CD8-positive, alpha-beta T cell (primary cell): ENCODE measurements at regions of chr4 and their contacts with region 1.

Region 1: GRCh38 chr4:42656944-42657792 is at the start of gene ATP8A1:
- DNase-seq: peak; percentile 90 to 97 (median 93)
- ATAC-seq: peak; percentile 94
- H3K4me3 ChIP-seq: peak within 1 kb of the TSS; percentile 80 to 93
- H3K4me3 Mint-ChIP-seq: peak within 1 kb of the TSS; percentile 97
- H3K27ac ChIP-seq: peak within 1 kb of the TSS; percentile 81 to 95
- H3K27ac Mint-ChIP-seq: peak within 1 kb of the TSS; percentile 99
- H3K4me1 ChIP-seq: peaks cover 34% of the 10 kb centered on the region
- H3K4me1 Mint-ChIP-seq: peaks cover 53% of the 10 kb centered on the region
- H3K27me3 ChIP-seq: no peaks in the 10 kb centered on the region
- H3K27me3 Mint-ChIP-seq: no peaks in the 10 kb centered on the region
- CTCF ChIP-seq: no peak
- total RNA-seq, gene ATP8A1: 130 to 134 TPM

Region 2: GRCh38 chr4:41990365-41991111 is 666.6 kb before region 1 on chr4 and contains the start of gene SLC30A9:
- CTCF ChIA-PET with region 1: no interaction called
- POLR2A ChIA-PET with region 1: no interaction called
- intact Hi-C with region 1: loop called in 1 of 2 experiments (anchors 5 kb)
- DNase-seq: peak; percentile 84 to 98 (median 92)
- ATAC-seq: peak; percentile 94
- H3K4me3 ChIP-seq: peak within 1 kb of the TSS; percentile 77 to 78
- H3K4me3 Mint-ChIP-seq: peak within 1 kb of the TSS; percentile 95
- H3K27ac ChIP-seq: peak within 1 kb of the TSS; percentile 83 to 91
- H3K27ac Mint-ChIP-seq: peak within 1 kb of the TSS; percentile 98
- H3K4me1 ChIP-seq: peaks cover 20% of the 10 kb centered on the region
- H3K4me1 Mint-ChIP-seq: peaks cover 39% of the 10 kb centered on the region
- H3K27me3 ChIP-seq: no peaks in the 10 kb centered on the region
- H3K27me3 Mint-ChIP-seq: no peaks in the 10 kb centered on the region
- CTCF ChIP-seq: no peak
- total RNA-seq, gene SLC30A9: 16.3 to 18.7 TPM

Region 3: GRCh38 chr4:42600578-42600977 is 56.6 kb before region 1 on chr4:
- CTCF ChIA-PET with region 1: no interaction called
- POLR2A ChIA-PET with region 1: interaction called, 6 read pairs
- intact Hi-C with region 1: loop called in 1 of 2 experiments (anchors 10 kb)
- DNase-seq: no peak
- ATAC-seq: no peak
- H3K4me3 ChIP-seq: no peak overlapping the region
- H3K4me3 Mint-ChIP-seq: no peak overlapping the region
- H3K27ac ChIP-seq: no peak overlapping the region
- H3K27ac Mint-ChIP-seq: no peak overlapping the region
- H3K4me1 ChIP-seq: no peaks in the 10 kb centered on the region
- H3K4me1 Mint-ChIP-seq: peaks cover 18% of the 10 kb centered on the region
- H3K27me3 ChIP-seq: no peaks in the 10 kb centered on the region
- H3K27me3 Mint-ChIP-seq: no peaks in the 10 kb centered on the region
- CTCF ChIP-seq: no peak

Region 4: GRCh38 chr4:42633605-42634388 is 23.4 kb before region 1 on chr4:
- CTCF ChIA-PET with region 1: interaction called, 18 read pairs
- POLR2A ChIA-PET with region 1: interaction called, 61 read pairs
- intact Hi-C with region 1: loop called (anchors 1 kb)
- DNase-seq: no peak
- ATAC-seq: no peak
- H3K4me3 ChIP-seq: no peak overlapping the region
- H3K4me3 Mint-ChIP-seq: no peak overlapping the region
- H3K27ac ChIP-seq: no peak overlapping the region
- H3K27ac Mint-ChIP-seq: peak overlapping the region; percentile 9
- H3K4me1 ChIP-seq: peaks cover 88% of the 10 kb centered on the region
- H3K4me1 Mint-ChIP-seq: peaks cover 92% of the 10 kb centered on the region
- H3K27me3 ChIP-seq: no peaks in the 10 kb centered on the region
- H3K27me3 Mint-ChIP-seq: no peaks in the 10 kb centered on the region
- CTCF ChIP-seq: no peak

Region 5: DNA sequence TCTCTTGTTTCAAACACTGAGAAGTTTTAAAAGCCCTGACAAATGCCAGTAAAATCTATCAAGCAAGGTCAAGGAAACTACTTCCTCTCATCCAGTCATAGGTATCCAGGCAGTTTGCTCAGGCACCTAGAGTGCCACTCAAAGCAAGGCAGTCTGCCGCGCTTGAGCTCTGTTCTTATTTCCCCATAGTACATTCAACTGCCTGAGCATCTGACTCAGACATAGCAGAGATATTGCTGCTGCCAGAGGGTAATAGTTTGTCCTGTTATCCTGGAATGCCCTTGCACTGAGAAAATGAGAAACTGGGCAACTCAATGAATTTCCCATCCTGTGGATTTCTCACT is 15.9 kb after region 1 on chr4:
- CTCF ChIA-PET with region 1: interaction called, 13 read pairs
- POLR2A ChIA-PET with region 1: interaction called, 96 read pairs
- intact Hi-C with region 1: loop called in 1 of 2 experiments (anchors 1 kb)
- DNase-seq: peak in 6 of 9 experiments; percentile 26 to 57 (median 40)
- ATAC-seq: peak; percentile 45
- H3K4me3 ChIP-seq: no peak overlapping the region
- H3K4me3 Mint-ChIP-seq: peak overlapping the region; percentile 60
- H3K27ac ChIP-seq: peak overlapping the region; percentile 64 to 93
- H3K27ac Mint-ChIP-seq: peak overlapping the region; percentile 95
- H3K4me1 ChIP-seq: peaks cover 48% of the 10 kb centered on the region
- H3K4me1 Mint-ChIP-seq: peaks cover 56% of the 10 kb centered on the region
- H3K27me3 ChIP-seq: no peaks in the 10 kb centered on the region
- H3K27me3 Mint-ChIP-seq: no peaks in the 10 kb centered on the region
- CTCF ChIP-seq: no peak

Region 6: DNA sequence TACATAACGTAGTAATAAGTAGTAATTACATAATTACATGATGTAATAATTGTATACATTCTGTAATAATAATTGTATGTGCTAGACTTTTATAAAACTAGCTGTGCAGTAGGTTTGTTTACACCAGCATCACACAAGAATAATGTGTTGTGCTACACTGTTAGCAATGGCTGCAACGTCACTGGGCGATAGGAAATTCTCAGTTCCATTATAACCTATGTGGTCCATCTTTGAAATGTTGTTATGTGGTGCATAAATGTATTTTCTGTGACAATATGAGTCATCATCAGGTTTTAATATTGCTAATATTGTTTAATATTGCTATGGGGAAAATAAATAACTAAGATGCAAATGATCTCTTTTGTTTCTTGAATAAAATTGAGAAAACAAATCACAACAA is 45.7 kb after region 1 on chr4:
- CTCF ChIA-PET with region 1: no interaction called
- POLR2A ChIA-PET with region 1: no interaction called
- intact Hi-C with region 1: no loop called
- DNase-seq: no peak
- ATAC-seq: no peak
- H3K4me3 ChIP-seq: no peak overlapping the region
- H3K4me3 Mint-ChIP-seq: no peak overlapping the region
- H3K27ac ChIP-seq: no peak overlapping the region
- H3K27ac Mint-ChIP-seq: no peak overlapping the region
- H3K4me1 ChIP-seq: no peaks in the 10 kb centered on the region
- H3K4me1 Mint-ChIP-seq: peaks cover 5% of the 10 kb centered on the region
- H3K27me3 ChIP-seq: no peaks in the 10 kb centered on the region
- H3K27me3 Mint-ChIP-seq: no peaks in the 10 kb centered on the region
- CTCF ChIP-seq: no peak